ENCODE measurements at regions of chr19 and their contacts with region 1.

Region 1: GRCh38 chr19:37594304-37594981 is at the starts of genes ZNF540 and ZNF571:
- DNase-seq: peak; percentile 73 to 94 (median 79)
- ATAC-seq: peak; percentile 100
- H3K4me3 ChIP-seq: peak within 1 kb of the TSS; percentile 59
- H3K27ac ChIP-seq: peak within 1 kb of the TSS; percentile 58; the same call in 2 of the 3 replicates
- H3K4me1 ChIP-seq: peaks cover 0 to 14% of the 10 kb centered on the region in 2 experiments; a peak in 2 of 5 replicates
- H3K27me3 ChIP-seq: no peaks in the 10 kb centered on the region
- CTCF ChIP-seq: no peak
- EP300 ChIP-seq: no peak
- POLR2A ChIP-seq: 0 out of 2 replicates have a peak, but pooled peaks have one; percentile 43
- RAD21 ChIP-seq: no peak
- polyA plus RNA-seq, gene ZNF540: 0.20 to 0.56 TPM
- polyA plus RNA-seq, gene ZNF571: 2.1 to 3.1 TPM

Region 2: DNA sequence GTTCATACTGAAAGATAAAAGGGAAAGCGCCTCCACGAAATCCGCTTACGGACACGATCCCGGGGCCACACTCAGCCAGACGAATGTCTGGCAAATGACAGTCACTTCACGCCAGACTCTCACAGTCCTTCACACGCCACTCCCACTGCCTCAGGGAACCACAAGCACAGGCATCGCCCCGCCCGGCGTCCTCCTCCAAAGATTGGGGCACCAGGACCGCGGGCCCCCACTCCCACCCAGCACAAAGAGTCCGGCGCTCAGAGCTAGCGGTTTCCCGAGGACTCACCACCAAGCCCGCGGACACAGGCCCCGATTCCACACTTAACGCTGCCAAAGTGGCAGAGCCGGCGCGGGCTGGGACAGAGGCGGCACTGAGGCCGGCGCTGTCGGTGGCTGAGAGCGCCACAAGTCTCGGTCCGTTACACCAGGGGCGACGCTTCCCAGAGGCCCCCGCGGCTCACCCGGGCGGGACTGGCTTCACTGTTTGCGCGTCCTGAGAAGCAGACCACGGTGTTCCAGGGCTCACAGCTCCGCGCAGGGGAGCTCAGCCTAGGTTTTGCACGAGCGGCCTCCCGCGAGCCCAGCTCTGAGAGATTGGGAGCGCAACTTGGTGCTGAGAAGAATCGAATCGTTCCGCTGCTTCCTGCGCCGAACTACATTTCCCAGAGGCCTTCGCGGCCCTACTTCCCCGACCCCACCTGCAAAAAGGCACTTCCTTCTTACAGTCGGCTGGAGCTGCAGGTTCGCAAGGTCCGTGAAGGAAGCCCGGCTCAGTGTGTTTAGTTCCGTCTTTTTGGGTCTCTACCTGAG is 127.4 kb before region 1 on chr19 and contains the start of gene ZNF569:
- CTCF ChIA-PET with region 1: no interaction called
- POLR2A ChIA-PET with region 1: no interaction called
- in situ Hi-C with region 1: no loop called
- intact Hi-C with region 1: loop called (anchors 1 kb)
- DNase-seq: peak; percentile 70 to 87 (median 72)
- ATAC-seq: peak; percentile 97
- H3K4me3 ChIP-seq: peak within 1 kb of the TSS; percentile 61
- H3K27ac ChIP-seq: peak within 1 kb of the TSS; percentile 82
- H3K4me1 ChIP-seq: peaks cover 0 to 10% of the 10 kb centered on the region in 2 experiments; a peak in 2 of 5 replicates
- H3K27me3 ChIP-seq: no peaks in the 10 kb centered on the region
- CTCF ChIP-seq: no peak
- EP300 ChIP-seq: no peak
- POLR2A ChIP-seq: peak; percentile 72
- RAD21 ChIP-seq: no peak
- polyA plus RNA-seq, gene ZNF569: 2.1 to 3.9 TPM